MCF 10A (cell line): ENCODE measurements at regions of chr6 and their contacts with region 1.

Region 1: DNA sequence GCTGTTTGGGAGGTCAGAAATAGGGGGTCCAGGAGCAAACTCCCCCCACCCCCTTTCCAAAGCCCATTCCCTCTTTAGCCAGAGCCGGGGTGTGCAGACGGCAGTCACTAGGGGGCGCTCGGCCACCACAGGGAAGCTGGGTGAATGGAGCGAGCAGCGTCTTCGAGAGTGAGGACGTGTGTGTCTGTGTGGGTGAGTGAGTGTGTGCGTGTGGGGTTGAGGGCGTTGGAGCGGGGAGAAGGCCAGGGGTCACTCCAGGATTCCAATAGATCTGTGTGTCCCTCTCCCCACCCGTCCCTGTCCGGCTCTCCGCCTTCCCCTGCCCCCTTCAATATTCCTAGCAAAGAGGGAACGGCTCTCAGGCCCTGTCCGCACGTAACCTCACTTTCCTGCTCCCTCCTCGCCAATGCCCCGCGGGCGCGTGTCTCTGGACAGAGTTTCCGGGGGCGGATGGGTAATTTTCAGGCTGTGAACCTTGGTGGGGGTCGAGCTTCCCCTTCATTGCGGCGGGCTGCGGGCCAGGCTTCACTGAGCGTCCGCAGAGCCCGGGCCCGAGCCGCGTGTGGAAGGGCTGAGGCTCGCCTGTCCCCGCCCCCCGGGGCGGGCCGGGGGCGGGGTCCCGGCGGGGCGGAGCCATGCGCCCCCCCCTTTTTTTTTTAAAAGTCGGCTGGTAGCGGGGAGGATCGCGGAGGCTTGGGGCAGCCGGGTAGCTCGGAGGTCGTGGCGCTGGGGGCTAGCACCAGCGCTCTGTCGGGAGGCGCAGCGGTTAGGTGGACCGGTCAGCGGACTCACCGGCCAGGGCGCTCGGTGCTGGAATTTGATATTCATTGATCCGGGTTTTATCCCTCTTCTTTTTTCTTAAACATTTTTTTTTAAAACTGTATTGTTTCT is at the start of gene VEGFA:
- DNase-seq: peak; percentile 87
- H3K4me3 Mint-ChIP-seq: peak within 1 kb of the TSS; percentile 98
- H3K27ac Mint-ChIP-seq: peak within 1 kb of the TSS; percentile 81
- H3K4me1 Mint-ChIP-seq: peaks cover 18% of the 10 kb centered on the region
- H3K27me3 Mint-ChIP-seq: no peaks in the 10 kb centered on the region
- CTCF ChIP-seq: peak; percentile 97
- total RNA-seq, gene VEGFA: 265 and 366 TPM in 2 replicates

Region 2: GRCh38 chr6:43667245-43668150 is 102.3 kb before region 1 on chr6:
- CTCF ChIA-PET with region 1: interaction called, 30 read pairs
- POLR2A ChIA-PET with region 1: interaction called, 17 read pairs
- intact Hi-C with region 1: loop called (anchors 2 kb)
- DNase-seq: peak; percentile 81
- H3K4me3 Mint-ChIP-seq: peak overlapping the region; percentile 3
- H3K27ac Mint-ChIP-seq: peak overlapping the region; percentile 71
- H3K4me1 Mint-ChIP-seq: peaks cover 30% of the 10 kb centered on the region
- H3K27me3 Mint-ChIP-seq: no peaks in the 10 kb centered on the region
- CTCF ChIP-seq: peak; percentile 87

Region 3: GRCh38 chr6:43723737-43724295 is 46.0 kb before region 1 on chr6:
- CTCF ChIA-PET with region 1: interaction called, 41 read pairs
- POLR2A ChIA-PET with region 1: interaction called, 55 read pairs
- intact Hi-C with region 1: loop called (anchors 1 kb)
- DNase-seq: peak; percentile 90
- H3K4me3 Mint-ChIP-seq: no peak overlapping the region
- H3K27ac Mint-ChIP-seq: no peak overlapping the region
- H3K4me1 Mint-ChIP-seq: peaks cover 31% of the 10 kb centered on the region
- H3K27me3 Mint-ChIP-seq: peaks cover 14% of the 10 kb centered on the region
- CTCF ChIP-seq: peak; percentile 66

Region 4: DNA sequence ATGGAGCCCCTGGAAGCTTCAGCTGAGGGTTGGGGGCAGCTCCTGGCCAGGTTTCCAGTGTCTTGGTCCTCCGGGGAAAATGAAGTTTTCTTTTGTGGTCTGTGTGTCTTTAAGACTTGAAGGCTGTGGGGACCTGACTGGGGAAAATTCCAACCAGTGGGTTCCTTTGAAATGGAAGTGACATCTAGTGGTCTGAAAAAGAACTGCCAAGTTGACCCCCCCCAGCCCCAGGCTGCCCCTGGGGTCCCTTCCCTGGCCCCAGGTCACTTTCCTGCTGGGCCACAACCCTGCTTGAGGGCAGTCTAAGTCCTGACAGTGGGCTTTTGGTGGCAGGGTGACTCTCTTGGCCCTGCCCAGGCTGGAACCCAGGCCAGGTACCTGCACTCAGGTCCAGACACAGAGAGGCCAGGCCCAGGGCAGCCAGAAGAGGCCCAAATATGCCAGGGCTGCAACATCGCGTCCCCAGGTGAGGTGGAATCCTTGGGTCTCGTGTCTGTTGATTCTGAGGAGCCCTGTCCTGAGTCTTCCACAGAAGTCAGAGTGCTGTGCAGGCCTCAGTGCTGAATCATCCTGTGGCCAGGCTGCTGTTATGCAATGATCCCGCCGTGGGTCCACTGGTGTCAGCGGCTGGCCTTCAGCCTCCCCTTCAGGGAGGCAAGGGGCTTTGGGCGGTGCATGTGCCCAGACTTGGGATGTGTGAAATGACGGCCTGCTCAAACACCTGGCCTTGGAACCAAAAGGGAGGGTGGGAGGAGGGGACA is 68.7 kb after region 1 on chr6:
- CTCF ChIA-PET with region 1: interaction called, 8 read pairs
- POLR2A ChIA-PET with region 1: no interaction called
- intact Hi-C with region 1: loop called (anchors 5 kb)
- DNase-seq: peak; percentile 34
- H3K4me3 Mint-ChIP-seq: no peak overlapping the region
- H3K27ac Mint-ChIP-seq: no peak overlapping the region
- H3K4me1 Mint-ChIP-seq: no peaks in the 10 kb centered on the region
- H3K27me3 Mint-ChIP-seq: no peaks in the 10 kb centered on the region
- CTCF ChIP-seq: peak; percentile 39

Region 5: DNA sequence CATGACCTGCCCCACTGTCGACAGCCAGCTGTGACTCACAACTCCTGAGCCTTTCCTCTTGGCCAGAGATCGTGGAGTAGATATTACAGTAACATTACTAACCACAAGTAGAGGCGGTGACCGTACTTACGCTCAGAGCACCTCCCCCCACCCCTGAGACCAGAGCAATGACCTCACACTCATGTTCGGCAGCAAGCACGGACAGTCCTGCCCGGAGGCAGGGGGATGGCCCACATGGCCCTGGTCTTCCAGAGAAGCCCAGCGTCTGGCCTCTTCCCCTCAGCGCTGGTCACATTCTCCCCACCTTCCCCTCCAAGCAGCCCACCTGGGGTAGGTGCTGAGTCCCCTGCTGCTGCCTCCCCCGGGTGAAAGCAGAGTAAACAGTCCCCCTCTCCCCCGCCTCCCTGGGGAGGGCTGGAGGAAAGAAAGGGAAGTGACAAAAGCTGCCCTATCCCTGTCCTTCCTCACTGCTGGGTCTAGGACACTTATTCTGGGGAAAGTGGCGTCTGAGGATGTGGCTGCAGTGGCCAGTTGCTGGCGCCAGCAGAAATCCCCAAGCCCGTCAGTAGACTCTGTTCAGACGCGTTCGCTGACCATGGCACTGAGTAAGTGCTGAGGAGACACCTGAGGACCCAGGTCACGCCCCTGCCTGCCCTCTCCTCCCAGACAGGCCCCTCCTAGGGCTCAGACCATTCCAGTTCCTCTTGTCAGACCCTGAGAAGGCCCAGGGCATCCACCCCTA is 289.0 kb after region 1 on chr6:
- CTCF ChIA-PET with region 1: interaction called, 9 read pairs
- POLR2A ChIA-PET with region 1: interaction called, 20 read pairs
- intact Hi-C with region 1: no loop called
- DNase-seq: peak; percentile 99
- H3K4me3 Mint-ChIP-seq: peak overlapping the region; percentile 58
- H3K27ac Mint-ChIP-seq: peak overlapping the region; percentile 93
- H3K4me1 Mint-ChIP-seq: peaks cover 66% of the 10 kb centered on the region
- H3K27me3 Mint-ChIP-seq: no peaks in the 10 kb centered on the region
- CTCF ChIP-seq: no peak

Region 6: DNA sequence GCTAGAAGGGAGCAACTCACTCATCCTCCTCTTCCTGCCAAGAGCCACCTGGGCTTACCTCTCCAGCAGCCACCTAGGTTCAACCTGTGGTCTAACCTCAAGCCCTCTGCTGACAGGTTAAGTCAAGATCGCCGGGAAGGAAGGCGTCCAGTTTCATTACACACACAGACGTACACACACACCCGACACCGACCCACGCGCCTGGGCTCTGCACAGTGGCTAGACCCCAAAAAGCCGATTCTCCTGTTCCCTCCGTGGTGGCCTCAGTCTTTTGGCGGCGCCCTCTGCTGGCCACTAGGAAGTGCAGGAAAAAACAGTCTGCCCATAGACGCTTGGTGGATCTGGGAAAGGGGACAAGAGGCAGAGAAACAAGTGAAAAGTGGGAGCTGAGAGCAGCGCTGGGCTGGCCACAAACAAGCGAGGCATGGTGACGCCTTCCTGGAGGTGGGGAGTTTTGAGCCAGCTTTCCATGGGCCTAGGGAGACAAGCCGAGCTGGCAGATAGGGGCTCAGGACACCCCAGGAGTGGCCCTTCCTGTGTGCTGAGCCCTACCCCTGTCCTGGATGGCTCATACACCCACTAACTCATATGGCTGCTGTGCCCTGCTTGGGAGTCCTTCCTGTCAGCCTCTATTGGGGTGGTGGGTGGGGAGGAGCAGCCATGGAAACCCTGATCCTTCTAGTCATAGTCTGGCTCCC is 304.8 kb after region 1 on chr6:
- CTCF ChIA-PET with region 1: interaction called, 237 read pairs
- POLR2A ChIA-PET with region 1: interaction called, 48 read pairs
- intact Hi-C with region 1: loop called (anchors 1 kb)
- DNase-seq: peak; percentile 82
- H3K4me3 Mint-ChIP-seq: peak overlapping the region; percentile 71
- H3K27ac Mint-ChIP-seq: no peak overlapping the region
- H3K4me1 Mint-ChIP-seq: peaks cover 25% of the 10 kb centered on the region
- H3K27me3 Mint-ChIP-seq: no peaks in the 10 kb centered on the region
- CTCF ChIP-seq: peak; percentile 84

Region 7: DNA sequence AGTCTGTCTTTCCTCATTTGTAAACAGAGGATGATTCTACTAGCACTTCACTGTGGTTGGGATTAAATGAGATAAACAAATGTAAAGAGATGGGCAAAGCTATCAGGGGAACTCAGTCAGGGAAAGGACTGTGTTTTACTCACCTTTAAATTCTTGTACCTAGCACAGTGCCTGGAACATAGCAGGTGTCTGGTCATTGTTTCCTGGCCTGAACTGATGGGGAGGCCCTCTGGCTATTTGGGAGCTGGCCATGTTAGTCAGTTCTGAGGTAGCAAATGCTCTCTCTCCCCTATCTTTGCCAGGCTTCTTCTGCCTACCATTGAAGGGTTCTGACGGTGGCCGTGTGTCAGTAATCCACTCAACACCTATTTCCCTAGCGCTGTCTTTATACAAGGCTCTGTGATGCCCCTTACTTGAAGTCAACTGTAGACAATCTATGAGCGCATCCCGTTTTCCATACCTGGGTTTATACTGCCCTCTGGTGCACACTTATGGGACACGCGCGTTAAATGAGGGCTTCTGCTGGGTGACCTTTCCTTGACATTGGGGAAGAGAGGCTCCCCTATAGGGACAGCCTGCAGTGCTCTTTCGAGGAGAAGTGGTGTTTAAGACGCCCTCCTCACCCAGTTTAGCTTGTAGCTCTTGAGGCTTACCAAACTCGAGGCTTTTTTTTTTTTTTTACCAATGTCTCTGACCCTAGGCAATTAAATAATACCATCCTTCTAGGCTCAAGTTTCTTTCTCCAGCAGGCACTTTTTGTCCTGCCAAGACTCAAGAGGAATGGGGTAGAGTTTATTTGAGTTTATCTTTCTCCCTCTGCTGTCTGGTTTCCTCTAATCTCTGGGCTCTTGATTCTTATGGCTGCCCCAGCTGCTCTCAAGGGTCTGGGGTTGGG is 568.7 kb after region 1 on chr6:
- CTCF ChIA-PET with region 1: interaction called, 5 read pairs
- POLR2A ChIA-PET with region 1: no interaction called
- intact Hi-C with region 1: loop called (anchors 1 kb)
- DNase-seq: peak; percentile 77
- H3K4me3 Mint-ChIP-seq: no peak overlapping the region
- H3K27ac Mint-ChIP-seq: no peak overlapping the region
- H3K4me1 Mint-ChIP-seq: no peaks in the 10 kb centered on the region
- H3K27me3 Mint-ChIP-seq: peaks cover 40% of the 10 kb centered on the region
- CTCF ChIP-seq: peak; percentile 60

Region 8: GRCh38 chr6:44367681-44368080 is 597.9 kb after region 1 on chr6:
- CTCF ChIA-PET with region 1: no interaction called
- POLR2A ChIA-PET with region 1: no interaction called
- intact Hi-C with region 1: no loop called
- DNase-seq: no peak
- H3K4me3 Mint-ChIP-seq: no peak overlapping the region
- H3K27ac Mint-ChIP-seq: no peak overlapping the region
- H3K4me1 Mint-ChIP-seq: peaks cover 5% of the 10 kb centered on the region
- H3K27me3 Mint-ChIP-seq: peaks cover 26% of the 10 kb centered on the region
- CTCF ChIP-seq: no peak